ENCODE measurements at regions of chr5 and their contacts with region 1.

Region 1: DNA sequence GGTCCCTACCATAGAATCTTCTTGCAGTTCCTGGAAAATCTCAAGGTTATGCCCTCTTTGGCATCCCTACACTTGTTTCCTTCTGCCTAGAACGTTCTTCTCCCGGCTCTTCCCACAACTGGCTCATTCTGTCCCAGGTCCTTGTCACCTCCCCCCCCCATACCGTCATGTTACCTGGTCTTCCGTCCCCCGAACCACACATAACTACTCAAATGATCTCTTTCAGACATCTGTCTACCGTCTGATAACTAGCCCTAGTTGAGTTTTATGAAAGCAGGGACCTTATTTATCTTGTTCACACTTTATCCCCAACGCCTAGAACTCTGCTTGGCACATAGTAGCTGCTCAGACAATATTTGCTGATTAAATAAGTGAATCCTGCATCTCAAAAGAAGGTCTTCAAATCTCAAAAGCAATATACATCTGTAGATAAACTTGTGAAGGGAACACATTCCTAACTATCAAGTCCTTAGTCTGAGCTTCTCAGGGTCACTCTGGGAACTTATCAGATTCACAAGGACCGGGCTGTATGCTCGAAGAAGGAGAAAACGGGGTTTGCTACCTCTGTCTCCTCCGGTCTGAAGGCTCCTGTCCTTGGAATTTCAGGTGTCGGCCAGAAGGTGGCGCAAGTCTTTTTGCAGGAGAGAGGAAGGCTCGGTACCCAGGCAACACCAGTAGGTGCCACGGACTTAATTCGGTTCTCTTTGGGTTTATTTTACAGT is 30.0 kb downstream of the LCP2 start:
- DNase-seq: peak; percentile 93
- H3K4me3 Mint-ChIP-seq: peak overlapping the region; percentile 73
- H3K27ac Mint-ChIP-seq: peak overlapping the region; percentile 77
- H3K4me1 Mint-ChIP-seq: peaks cover 79% of the 10 kb centered on the region
- H3K27me3 Mint-ChIP-seq: no peaks in the 10 kb centered on the region

Region 2: DNA sequence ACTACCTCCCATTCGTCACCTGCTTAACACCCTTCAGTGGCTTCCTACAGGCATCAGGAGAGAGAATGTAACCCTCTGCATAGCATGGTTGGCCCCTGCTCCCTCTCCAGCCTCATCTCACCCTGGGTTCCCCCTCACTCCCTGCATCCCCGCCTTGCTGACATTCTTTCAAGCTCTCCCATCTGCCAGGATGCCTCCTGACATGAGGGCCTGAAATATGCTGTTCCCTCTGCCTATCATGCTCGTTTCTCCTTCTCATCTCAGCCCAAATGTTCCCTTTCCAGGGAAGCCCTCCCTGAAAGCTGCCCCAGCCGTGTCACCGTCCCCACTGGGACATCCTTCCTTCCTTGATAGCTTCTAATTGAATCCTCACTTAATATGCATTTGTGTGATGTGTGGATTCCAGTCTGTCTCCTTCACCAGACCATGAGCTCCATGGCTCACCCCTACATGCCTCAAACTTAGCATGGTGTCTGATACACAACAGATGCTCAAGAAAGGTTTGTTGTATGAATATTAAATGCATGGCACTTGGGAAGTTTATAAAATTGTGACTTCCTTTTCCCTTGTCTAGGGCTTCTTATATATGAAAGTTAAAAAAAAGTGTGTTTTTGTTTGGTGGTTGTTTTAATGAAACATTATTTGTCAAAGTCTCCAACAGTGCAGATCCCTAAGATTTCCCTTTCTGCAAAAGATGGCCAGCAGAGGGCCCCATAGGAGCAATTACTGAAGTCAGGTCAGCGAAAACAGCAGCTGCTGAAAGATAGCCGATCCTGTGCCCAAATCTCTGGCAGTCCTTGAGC is 42.1 kb before region 1 on chr5:
- intact Hi-C with region 1: loop called (anchors 2 kb)
- DNase-seq: peak; percentile 93
- H3K4me3 Mint-ChIP-seq: no peak overlapping the region
- H3K27ac Mint-ChIP-seq: peak overlapping the region; percentile 16
- H3K4me1 Mint-ChIP-seq: peaks cover 9% of the 10 kb centered on the region
- H3K27me3 Mint-ChIP-seq: no peaks in the 10 kb centered on the region

Region 3: DNA sequence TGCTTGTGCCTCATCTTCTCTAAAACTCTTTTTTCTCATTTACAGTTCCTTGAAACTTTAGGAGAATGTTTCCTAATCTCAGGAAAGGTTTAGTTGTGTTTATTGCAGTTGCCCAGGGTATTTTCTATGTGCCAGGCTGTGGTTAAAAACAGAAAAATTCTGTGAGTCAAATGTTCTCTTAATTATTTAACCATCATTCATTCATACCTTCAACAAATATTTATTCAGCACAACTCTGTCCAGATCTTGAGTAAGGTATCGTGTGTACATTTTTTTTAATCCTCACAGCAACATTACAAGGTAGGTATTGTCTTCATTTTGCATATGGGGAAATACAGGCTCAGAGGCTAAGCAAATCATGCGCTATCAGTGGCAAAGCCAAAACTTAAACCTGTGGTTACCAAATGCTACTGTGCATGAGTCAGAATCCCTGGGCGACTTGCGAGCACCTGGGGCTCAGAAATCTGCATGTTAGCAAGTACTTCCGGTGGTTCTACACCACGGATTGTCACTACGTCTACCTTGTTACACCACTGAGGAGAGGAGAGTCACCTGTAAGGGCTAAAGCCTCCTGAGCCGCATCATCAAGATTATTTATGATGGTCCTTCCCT is 13.6 kb before region 1 on chr5:
- intact Hi-C with region 1: loop called (anchors 1 kb)
- DNase-seq: peak; percentile 88
- H3K4me3 Mint-ChIP-seq: peak overlapping the region; percentile 26
- H3K27ac Mint-ChIP-seq: peak overlapping the region; percentile 76
- H3K4me1 Mint-ChIP-seq: peaks cover 53% of the 10 kb centered on the region
- H3K27me3 Mint-ChIP-seq: no peaks in the 10 kb centered on the region

Region 4: GRCh38 chr5:170302653-170303501 is 35.3 kb after region 1 on chr5:
- intact Hi-C with region 1: loop called (anchors 5 kb)
- DNase-seq: peak; percentile 91
- H3K4me3 Mint-ChIP-seq: peak overlapping the region; percentile 81
- H3K27ac Mint-ChIP-seq: peak overlapping the region; percentile 90
- H3K4me1 Mint-ChIP-seq: peaks cover 72% of the 10 kb centered on the region
- H3K27me3 Mint-ChIP-seq: no peaks in the 10 kb centered on the region

Region 5: DNA sequence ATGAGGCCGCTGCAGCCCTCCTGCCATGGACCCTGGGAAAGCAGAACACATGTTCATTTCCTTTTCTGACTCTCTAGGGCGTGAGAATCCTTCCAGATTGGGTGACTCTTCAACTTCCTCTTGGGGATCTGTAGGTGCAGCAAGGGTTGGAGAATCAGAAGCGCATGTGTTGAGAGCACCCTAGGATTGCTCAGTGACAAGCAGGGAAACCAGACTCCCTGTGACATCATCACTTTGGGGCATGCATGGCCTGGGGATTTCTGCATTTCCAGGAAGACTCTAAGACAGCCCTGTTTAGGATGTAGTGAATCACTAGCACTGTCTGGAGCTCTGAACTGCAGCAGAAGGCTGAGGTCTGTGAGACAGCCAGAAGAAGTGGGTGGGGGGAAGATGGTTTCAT is 45.1 kb after region 1 on chr5:
- intact Hi-C with region 1: loop called (anchors 1 kb)
- DNase-seq: peak; percentile 86
- H3K4me3 Mint-ChIP-seq: peak overlapping the region; percentile 76
- H3K27ac Mint-ChIP-seq: peak overlapping the region; percentile 94
- H3K4me1 Mint-ChIP-seq: peaks cover 48% of the 10 kb centered on the region
- H3K27me3 Mint-ChIP-seq: no peaks in the 10 kb centered on the region

Region 6: GRCh38 chr5:170420780-170421412 is 153.3 kb after region 1 on chr5:
- intact Hi-C with region 1: loop called (anchors 5 kb)
- DNase-seq: peak; percentile 85
- H3K4me3 Mint-ChIP-seq: no peak overlapping the region
- H3K27ac Mint-ChIP-seq: no peak overlapping the region
- H3K4me1 Mint-ChIP-seq: peaks cover 6% of the 10 kb centered on the region
- H3K27me3 Mint-ChIP-seq: peaks cover 26% of the 10 kb centered on the region